Right cardiac atrium (tissue), 5 donors: ENCODE measurements at regions of chr18 and their contacts with region 1.

Region 1: DNA sequence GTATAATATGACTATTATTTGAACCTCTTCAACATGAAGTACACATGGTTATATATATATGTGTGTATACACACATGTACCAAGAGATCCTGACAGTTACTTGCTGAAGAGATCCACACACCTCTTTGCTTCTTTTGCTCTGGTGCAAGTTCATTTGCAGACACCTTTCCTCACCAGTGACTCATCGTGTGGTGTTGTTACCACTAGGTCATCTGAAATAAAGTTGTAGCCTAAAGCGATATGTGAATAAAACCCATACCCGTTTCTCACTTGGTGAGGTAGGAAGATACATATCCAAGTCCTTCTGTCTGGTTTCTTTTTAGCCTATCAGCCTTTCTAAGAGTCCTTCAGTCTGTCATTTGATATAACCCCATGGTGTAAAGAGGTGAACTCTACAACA is 379.5 kb upstream of the RAB12 start:
- DNase-seq: no peak
- ATAC-seq: no peak
- H3K4me3 ChIP-seq: no peak overlapping the region
- H3K27ac ChIP-seq: no peak overlapping the region
- H3K4me1 ChIP-seq: no peaks in the 10 kb centered on the region
- H3K27me3 ChIP-seq: no peaks in the 10 kb centered on the region

Region 2: GRCh38 chr18:8177330-8178016 is 52.3 kb before region 1 on chr18:
- intact Hi-C with region 1: loop called in 1 of 4 experiments (anchors 10 kb)
- DNase-seq: no peak
- ATAC-seq: peak in 1 of 2 donors; percentile 67
- H3K4me3 ChIP-seq: no peak overlapping the region
- H3K27ac ChIP-seq: no peak overlapping the region
- H3K4me1 ChIP-seq: peaks cover 4% of the 10 kb centered on the region
- H3K27me3 ChIP-seq: no peaks in the 10 kb centered on the region